Posterior vena cava (tissue), 2 donors: ENCODE measurements at regions of chr12 and their contacts with region 1.

Region 1: GRCh38 chr12:54191550-54192022 is 2.8 kb upstream of the SMUG1 start:
- DNase-seq: peak; percentile 93

Region 2: GRCh38 chr12:54175130-54175963 is 16.2 kb before region 1 on chr12:
- intact Hi-C with region 1: no loop called
- DNase-seq: no peak

Region 3: DNA sequence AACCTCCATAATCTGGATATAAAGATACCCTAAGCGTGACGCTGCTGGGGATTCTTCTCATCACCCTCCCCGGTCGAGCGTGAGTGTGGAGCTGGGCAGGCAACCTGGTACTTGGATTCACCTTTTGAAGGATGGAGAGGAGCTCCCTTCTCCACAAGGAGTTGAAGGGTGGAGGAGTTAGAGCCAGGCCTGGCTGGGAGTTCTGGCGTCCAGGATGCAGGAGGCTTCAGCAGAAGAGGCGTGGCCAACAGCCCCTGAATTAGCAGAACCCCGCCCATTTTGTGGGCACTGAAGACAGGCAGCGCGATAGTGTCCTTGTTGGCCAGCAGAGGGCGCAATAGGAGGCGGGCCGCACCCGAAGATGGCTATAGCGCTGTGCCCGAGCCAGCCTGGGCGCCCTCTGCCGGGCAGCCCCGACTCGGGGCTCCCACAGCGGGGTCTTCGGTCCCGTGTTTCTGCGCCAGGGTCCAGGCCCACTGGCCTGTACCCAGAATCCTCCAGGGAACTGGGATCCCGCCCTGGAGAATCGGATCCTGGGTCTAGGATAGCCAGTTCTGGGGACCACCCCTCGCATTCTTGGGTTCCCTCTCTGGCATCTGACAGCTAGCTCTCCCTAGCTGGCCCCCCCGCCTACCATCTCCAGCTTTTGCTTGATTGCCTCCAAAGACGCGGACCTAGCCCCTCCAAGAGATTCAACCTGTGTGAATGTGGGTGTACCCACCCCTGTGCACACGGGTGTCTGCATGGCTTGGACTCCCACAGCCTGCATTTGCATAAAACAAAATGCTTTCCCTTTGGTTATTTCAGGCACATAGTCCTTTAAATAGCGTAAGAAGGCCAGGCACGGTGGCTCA is 23.2 kb after region 1 on chr12:
- intact Hi-C with region 1: loop called in 1 of 2 experiments (anchors 1 kb)
- DNase-seq: peak; percentile 96

Region 4: GRCh38 chr12:54251667-54252284 is 60.2 kb after region 1 on chr12:
- intact Hi-C with region 1: no loop called
- DNase-seq: no peak